BJ (cell line): ENCODE measurements at regions of chr17 and their contacts with region 1.

Region 1: GRCh38 chr17:45385331-45385997 is 47.2 kb downstream of the ARHGAP27 start:
- DNase-seq: no peak
- H3K4me3 ChIP-seq: no peak overlapping the region
- H3K27me3 ChIP-seq: no peaks in the 10 kb centered on the region; the same call in 1 of the 2 replicates
- CTCF ChIP-seq: peak; percentile 100

Region 2: DNA sequence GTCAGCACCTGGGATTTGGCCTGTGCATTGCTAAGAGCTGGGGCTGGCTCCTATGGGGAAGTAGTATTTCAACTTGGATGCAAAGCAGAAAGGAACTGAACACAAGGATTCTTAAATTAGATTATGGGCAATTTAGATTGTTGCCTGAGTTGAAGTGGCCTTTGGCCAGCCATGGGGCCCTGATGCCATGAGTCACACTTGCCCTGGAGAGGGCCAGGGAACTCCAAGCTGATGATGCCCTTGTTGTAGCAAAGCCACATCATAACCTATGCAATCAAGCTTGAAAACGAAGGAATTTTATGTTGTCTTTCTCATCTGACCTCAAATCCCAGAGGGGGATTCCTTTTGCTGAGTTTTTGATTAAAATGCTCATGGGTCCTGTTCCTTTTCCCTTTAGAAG is 119.6 kb before region 1 on chr17:
- CTCF ChIA-PET with region 1: interaction called, 15 read pairs
- POLR2A ChIA-PET with region 1: no interaction called
- DNase-seq: no peak
- H3K4me3 ChIP-seq: no peak overlapping the region
- H3K27me3 ChIP-seq: no peaks in the 10 kb centered on the region
- CTCF ChIP-seq: no peak

Region 3: DNA sequence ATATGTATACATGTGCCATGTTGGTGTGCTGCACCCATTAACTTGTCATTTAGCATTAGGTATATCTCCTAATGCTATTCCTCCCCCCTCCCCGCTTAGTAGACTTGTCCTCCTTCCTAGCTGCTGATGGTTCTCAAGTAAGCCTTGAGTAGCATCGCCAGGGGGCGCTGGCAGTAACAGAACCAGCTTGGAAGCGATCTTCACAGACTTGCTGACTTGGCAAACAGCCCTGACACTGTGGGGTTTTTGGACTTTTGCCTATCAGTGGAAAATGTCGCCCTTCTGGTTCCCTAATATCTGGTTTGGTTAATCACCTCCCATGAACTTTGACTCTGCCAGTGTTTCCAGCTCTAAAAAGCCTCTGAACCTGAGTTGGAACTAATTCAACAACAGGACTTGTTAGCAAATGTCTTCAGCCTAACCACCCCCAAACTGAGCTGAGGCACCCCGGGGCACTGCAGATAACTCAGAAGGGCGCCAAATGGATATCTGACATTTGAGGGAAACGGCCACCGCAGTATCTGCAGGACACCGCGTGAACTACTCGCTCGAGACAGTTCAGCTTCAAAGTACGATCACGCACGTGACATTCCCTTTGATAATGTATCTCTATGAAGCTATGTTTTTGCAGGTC is 108.1 kb before region 1 on chr17:
- CTCF ChIA-PET with region 1: interaction called, 83 read pairs
- POLR2A ChIA-PET with region 1: no interaction called
- DNase-seq: no peak
- H3K4me3 ChIP-seq: no peak overlapping the region
- H3K27me3 ChIP-seq: no peaks in the 10 kb centered on the region
- CTCF ChIP-seq: peak; percentile 82

Region 4: GRCh38 chr17:45293413-45294211 is 91.9 kb before region 1 on chr17:
- CTCF ChIA-PET with region 1: interaction called, 20 read pairs
- POLR2A ChIA-PET with region 1: no interaction called
- DNase-seq: no peak
- H3K4me3 ChIP-seq: no peak overlapping the region
- H3K27me3 ChIP-seq: no peaks in the 10 kb centered on the region
- CTCF ChIP-seq: peak; percentile 26; the same call in 1 of the 2 replicates

Region 5: GRCh38 chr17:45317112-45317928 is 68.1 kb before region 1 on chr17:
- CTCF ChIA-PET with region 1: interaction called, 13 read pairs
- POLR2A ChIA-PET with region 1: no interaction called
- DNase-seq: peak; percentile 100
- H3K4me3 ChIP-seq: peak overlapping the region; percentile 40
- H3K27me3 ChIP-seq: no peaks in the 10 kb centered on the region
- CTCF ChIP-seq: 0 out of 2 replicates have a peak, but pooled peaks have one; percentile 16